ENCODE measurements at regions of chr2 and their contacts with region 1.

Region 1: DNA sequence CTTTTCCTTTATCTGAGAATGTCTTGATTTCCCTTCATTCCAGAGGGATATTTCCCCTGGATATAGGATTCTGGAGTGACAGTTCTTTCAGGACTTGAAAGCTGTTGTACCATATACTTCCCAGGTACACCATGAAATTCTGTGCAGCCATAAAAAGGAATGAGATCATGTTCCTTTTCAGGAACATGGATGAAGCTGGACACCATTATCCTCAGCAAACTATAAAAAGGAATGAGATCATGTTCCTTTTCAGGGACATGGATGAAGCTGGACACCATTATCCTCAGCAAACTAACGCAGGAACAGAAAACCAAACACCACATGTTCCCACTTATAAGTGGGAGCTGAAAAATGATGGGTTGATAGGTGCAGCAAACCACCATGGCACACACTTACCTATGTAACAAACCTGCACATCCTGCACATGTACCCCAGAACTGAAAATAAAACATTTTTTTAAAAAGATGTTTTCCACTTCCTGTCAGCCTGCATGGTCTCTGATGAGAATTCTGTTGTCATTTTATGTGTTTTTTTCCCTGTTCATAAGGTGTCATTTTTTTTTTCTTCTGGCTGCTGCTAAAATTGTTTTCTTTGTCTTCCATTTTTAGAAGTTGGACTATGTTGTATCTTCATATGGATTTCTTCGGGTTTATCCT is 133.3 kb downstream of the DNAH6 start:
- DNase-seq: peak in 7 of 9 donors; percentile 16 to 63 (median 49)
- ATAC-seq: no peak
- H3K4me3 ChIP-seq: no peak overlapping the region
- H3K4me3 Mint-ChIP-seq: peak overlapping the region; percentile 27 to 78 (median 58)
- H3K27ac ChIP-seq: no peak overlapping the region
- H3K27ac Mint-ChIP-seq: peak overlapping the region; percentile 2 to 92 (median 78)
- H3K4me1 ChIP-seq: peaks cover 21 to 83% of the 10 kb centered on the region in 2 donors
- H3K4me1 Mint-ChIP-seq: peaks cover 52 to 93% (median 89%) of the 10 kb centered on the region in 7 donors
- H3K27me3 ChIP-seq: no peaks in the 10 kb centered on the region
- H3K27me3 Mint-ChIP-seq: peaks cover 0 to 2% (median 0%) of the 10 kb centered on the region in 5 donors

Region 2: GRCh38 chr2:84546551-84546950 is 103.1 kb before region 1 on chr2:
- CTCF ChIA-PET with region 1: no interaction called
- POLR2A ChIA-PET with region 1: no interaction called
- intact Hi-C with region 1: no loop called
- DNase-seq: no peak
- ATAC-seq: no peak
- H3K4me3 ChIP-seq: no peak overlapping the region
- H3K4me3 Mint-ChIP-seq: no peak overlapping the region
- H3K27ac ChIP-seq: no peak overlapping the region
- H3K27ac Mint-ChIP-seq: no peak overlapping the region
- H3K4me1 ChIP-seq: no peaks in the 10 kb centered on the region
- H3K4me1 Mint-ChIP-seq: peaks cover 0 to 10% (median 7%) of the 10 kb centered on the region in 7 donors
- H3K27me3 ChIP-seq: no peaks in the 10 kb centered on the region
- H3K27me3 Mint-ChIP-seq: peaks cover 0 to 2% (median 0%) of the 10 kb centered on the region in 5 donors

Region 3: GRCh38 chr2:84669122-84669521 is 19.5 kb after region 1 on chr2:
- CTCF ChIA-PET with region 1: no interaction called
- POLR2A ChIA-PET with region 1: interaction called, 3 read pairs
- intact Hi-C with region 1: loop called in 1 of 2 experiments (anchors 2 kb)
- DNase-seq: no peak
- ATAC-seq: no peak
- H3K4me3 ChIP-seq: no peak overlapping the region
- H3K4me3 Mint-ChIP-seq: no peak overlapping the region
- H3K27ac ChIP-seq: no peak overlapping the region
- H3K27ac Mint-ChIP-seq: no peak overlapping the region
- H3K4me1 ChIP-seq: no peaks in the 10 kb centered on the region
- H3K4me1 Mint-ChIP-seq: peaks cover 0 to 41% (median 22%) of the 10 kb centered on the region in 7 donors
- H3K27me3 ChIP-seq: no peaks in the 10 kb centered on the region
- H3K27me3 Mint-ChIP-seq: peaks cover 0 to 14% (median 0%) of the 10 kb centered on the region in 5 donors

Region 4: GRCh38 chr2:84694088-84694622 is 44.5 kb after region 1 on chr2:
- CTCF ChIA-PET with region 1: no interaction called
- POLR2A ChIA-PET with region 1: interaction called, 4 read pairs
- intact Hi-C with region 1: loop called in 1 of 2 experiments (anchors 1 kb)
- DNase-seq: peak in 8 of 9 donors; percentile 11 to 86 (median 79)
- ATAC-seq: peak; percentile 88
- H3K4me3 ChIP-seq: peak overlapping the region; percentile 43
- H3K4me3 Mint-ChIP-seq: peak overlapping the region; percentile 27 to 80 (median 68)
- H3K27ac ChIP-seq: peak overlapping the region; percentile 59
- H3K27ac Mint-ChIP-seq: peak overlapping the region; percentile 82 to 93 (median 87)
- H3K4me1 ChIP-seq: peaks cover 24 to 38% of the 10 kb centered on the region in 2 donors
- H3K4me1 Mint-ChIP-seq: peaks cover 8 to 93% (median 76%) of the 10 kb centered on the region in 7 donors
- H3K27me3 ChIP-seq: no peaks in the 10 kb centered on the region
- H3K27me3 Mint-ChIP-seq: peaks cover 0 to 3% (median 0%) of the 10 kb centered on the region in 5 donors

Region 5: DNA sequence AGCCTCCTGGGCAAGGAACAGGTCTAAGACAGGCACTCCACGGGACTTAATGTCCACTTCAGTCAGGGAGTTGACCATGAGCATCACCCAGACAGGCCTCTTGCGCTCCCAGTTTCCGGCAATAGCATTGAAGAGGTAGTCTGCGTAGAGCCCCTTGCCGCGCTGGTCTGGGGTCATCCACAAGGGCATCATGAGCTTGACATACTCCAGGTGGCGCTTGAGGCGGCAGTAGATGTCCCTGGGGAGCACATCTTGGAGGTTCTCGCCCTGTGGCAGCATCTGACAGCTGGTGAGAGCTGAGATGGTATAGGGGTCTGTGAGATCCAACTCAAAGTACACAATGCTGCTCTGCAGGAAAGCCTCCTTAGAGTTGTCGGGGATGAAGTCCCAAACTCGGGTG is 220.7 kb after region 1 on chr2:
- CTCF ChIA-PET with region 1: no interaction called
- POLR2A ChIA-PET with region 1: interaction called, 11 read pairs
- intact Hi-C with region 1: loop called in 1 of 2 experiments (anchors 5 kb)
- DNase-seq: no peak
- ATAC-seq: no peak
- H3K4me3 ChIP-seq: no peak overlapping the region
- H3K4me3 Mint-ChIP-seq: peak overlapping the region; percentile 15 to 89 (median 68)
- H3K27ac ChIP-seq: peak overlapping the region; percentile 24
- H3K27ac Mint-ChIP-seq: peak overlapping the region in 8 of 9 donors; percentile 33 to 98 (median 92)
- H3K4me1 ChIP-seq: peaks cover 2 to 75% of the 10 kb centered on the region in 2 donors
- H3K4me1 Mint-ChIP-seq: peaks cover 34 to 97% (median 87%) of the 10 kb centered on the region in 7 donors
- H3K27me3 ChIP-seq: no peaks in the 10 kb centered on the region
- H3K27me3 Mint-ChIP-seq: no peaks in the 10 kb centered on the region

Region 6: DNA sequence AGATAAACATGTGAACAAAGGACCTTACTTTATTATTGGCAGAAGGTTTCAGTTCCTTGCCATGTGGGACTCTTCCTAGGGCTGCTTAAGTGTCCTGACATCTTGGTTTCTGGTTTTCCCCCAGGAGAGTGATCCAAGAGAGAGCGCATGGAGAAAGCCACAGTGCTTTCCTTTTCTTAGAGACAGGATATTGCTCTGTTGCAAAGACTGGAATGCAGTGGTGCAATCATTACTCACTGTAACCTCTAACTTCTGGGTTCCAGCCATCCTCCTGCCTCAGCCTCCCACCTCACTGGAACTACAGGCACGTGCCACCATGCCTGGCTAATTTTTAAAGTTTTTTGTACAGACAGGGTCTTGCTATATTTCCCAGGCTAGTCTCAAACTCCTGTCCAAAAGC is 445.5 kb after region 1 on chr2:
- CTCF ChIA-PET with region 1: no interaction called
- POLR2A ChIA-PET with region 1: no interaction called
- intact Hi-C with region 1: no loop called
- DNase-seq: no peak
- ATAC-seq: no peak
- H3K4me3 ChIP-seq: no peak overlapping the region
- H3K4me3 Mint-ChIP-seq: no peak overlapping the region
- H3K27ac ChIP-seq: no peak overlapping the region
- H3K27ac Mint-ChIP-seq: no peak overlapping the region
- H3K4me1 ChIP-seq: no peaks in the 10 kb centered on the region
- H3K4me1 Mint-ChIP-seq: no peaks in the 10 kb centered on the region
- H3K27me3 ChIP-seq: no peaks in the 10 kb centered on the region
- H3K27me3 Mint-ChIP-seq: peaks cover 7 to 23% (median 19%) of the 10 kb centered on the region in 5 donors